ENCODE measurements at regions of chr15 and their contacts with region 1.

Region 1: DNA sequence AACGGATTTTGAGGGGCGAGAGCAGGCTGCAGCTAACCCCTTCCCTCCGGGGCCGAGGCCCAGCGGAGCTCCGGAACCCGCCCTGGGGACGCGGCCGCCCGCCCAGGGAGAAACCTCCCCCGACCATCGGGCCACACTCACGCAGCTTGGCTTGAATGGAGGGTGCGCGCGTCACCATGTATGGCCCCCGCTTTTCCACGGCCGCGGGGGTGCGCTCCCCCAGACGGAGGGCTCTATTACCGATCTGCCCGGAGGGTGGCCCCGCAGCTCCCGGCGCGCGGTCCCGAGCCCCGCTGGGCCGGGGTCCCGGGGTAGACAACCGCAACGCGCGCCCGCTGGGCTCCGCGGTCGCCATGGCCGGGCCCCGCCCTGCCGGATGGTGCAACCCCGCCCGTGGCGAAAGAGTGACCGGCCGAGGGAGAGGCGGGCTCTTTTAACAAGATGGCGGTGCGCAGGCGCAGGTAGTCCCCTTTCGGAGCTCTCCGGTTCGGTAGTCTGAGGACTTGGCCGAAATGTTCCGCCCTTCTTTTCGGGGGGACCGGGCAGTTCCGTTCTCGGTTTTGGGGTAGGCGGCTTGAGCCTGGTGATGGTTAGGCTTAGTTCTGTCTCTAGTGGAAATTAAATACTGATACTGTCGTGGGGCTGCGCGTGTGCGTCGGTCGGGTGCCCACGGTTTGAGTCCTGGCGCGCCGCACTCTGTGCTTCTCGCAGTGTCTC is at the start of gene FAM219B:
- DNase-seq: peak; percentile 96
- ATAC-seq: peak; percentile 96 to 97
- total RNA-seq, gene FAM219B: 91.2 to 117 TPM

Region 2: GRCh38 chr15:74781431-74782258 is 125.0 kb before region 1 on chr15 and contains the start of gene CSK:
- intact Hi-C with region 1: loop called in 1 of 2 experiments (anchors 10 kb)
- DNase-seq: peak; percentile 83
- ATAC-seq: peak; percentile 45 to 63
- total RNA-seq, gene CSK: 49.7 to 59.2 TPM

Region 3: GRCh38 chr15:74835307-74835823 is 71.2 kb before region 1 on chr15:
- intact Hi-C with region 1: loop called (anchors 5 to 10 kb)
- DNase-seq: peak; percentile 63
- ATAC-seq: peak in 1 of 2 donors; percentile 10

Region 4: DNA sequence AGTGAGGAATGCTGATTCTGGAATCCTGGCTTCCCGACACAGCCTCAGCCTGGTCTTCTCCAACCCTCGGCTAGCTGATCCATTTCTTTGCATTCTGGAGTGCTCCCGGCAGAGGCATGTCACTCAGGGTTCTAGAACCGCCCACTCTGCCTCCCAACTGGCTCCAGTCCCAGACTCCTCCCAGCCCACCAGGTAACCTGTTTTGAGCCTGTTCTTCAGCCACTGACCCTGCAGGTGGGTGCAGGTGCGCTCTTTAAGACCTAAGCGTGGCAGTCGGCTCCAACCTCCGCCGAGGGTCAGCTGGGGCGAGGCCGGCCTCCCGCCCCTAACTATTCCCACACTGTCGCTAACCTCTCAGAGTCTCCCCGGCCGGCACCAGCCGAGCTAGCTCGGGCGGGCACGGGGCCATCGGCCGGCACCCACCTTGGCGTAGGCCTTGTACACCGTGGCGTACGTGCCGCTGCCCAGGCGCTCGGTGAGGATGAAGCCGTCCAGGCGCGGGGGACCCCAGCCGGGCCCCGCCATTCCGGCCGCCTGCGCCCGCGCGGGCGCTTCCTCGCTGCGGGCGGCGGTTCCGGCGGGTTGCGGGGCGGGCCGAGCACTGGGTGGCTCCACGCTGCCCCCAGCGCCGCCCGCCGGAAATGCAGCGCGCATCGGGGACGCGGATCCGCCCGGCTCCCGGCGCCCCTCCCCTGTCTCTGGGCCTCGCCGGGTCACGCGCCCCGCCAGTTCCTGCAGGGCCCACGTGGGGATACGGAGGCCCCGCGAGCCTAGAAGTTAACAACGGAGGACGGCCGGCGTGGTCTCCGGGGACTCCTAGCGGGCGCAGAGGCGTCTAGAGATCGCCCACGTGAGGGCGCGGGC is 63.8 kb before region 1 on chr15 and contains the start of gene ULK3:
- intact Hi-C with region 1: loop called (anchors 5 to 10 kb)
- DNase-seq: peak; percentile 94
- ATAC-seq: peak; percentile 91 to 94
- total RNA-seq, gene ULK3: 35.3 to 41.4 TPM